CD8-positive, alpha-beta T cell (primary cell): ENCODE measurements at regions of chr2 and their contacts with region 1.

Region 1: DNA sequence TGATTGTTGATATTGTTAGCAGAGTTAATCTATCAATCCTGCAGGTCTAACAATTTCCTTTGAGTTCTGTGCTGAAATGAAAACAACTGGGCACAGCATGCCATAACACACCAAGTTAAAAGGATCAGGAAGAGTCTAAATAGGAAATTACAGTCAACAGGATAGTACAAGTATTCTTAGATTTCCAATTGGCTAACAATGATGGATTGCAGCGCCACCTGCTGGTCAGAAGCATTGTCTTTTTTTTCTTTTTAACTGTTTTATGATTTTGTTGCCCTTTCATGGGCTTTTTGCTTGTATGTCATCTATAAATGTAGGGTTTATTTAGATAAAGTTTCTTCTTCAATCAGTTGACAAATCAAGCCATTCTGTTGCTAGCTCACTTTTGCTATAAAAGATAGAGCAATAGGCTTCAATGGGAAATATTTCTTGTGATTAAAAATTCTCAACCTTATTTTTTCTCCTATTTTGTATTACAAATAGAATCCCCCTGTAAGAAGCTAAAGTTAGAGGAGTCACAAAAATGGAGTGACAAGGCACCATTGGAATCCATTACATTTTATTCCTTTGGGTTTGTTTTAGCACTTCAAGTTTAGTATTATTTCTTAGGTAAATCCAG is 40.8 kb upstream of the RPRM start:
- DNase-seq: peak; percentile 13 to 66 (median 50)
- ATAC-seq: no peak
- H3K4me3 ChIP-seq: no peak overlapping the region
- H3K4me3 Mint-ChIP-seq: no peak overlapping the region
- H3K27ac ChIP-seq: no peak overlapping the region
- H3K27ac Mint-ChIP-seq: no peak overlapping the region
- H3K4me1 ChIP-seq: no peaks in the 10 kb centered on the region
- H3K4me1 Mint-ChIP-seq: no peaks in the 10 kb centered on the region
- H3K27me3 ChIP-seq: no peaks in the 10 kb centered on the region
- H3K27me3 Mint-ChIP-seq: no peaks in the 10 kb centered on the region
- CTCF ChIP-seq: peak; percentile 88

Region 2: DNA sequence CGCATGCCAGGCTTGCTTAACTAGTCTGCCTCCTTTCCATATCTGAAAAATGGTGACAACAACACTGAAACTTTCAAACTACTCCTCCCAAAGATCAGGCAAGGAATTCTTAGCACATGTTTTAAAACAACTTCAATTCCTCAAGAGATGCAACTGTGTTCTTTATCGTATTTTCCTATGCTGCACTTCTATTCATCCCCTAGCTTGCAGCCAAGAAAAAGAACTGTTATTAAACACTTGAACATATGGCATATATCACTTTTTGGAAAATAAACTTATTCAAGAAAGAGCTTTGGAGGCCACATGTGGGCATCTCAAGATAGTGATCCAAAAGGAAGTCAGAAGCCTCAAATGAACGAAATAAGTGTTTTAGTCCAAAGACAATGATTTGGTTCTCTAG is 1268.2 kb before region 1 on chr2:
- CTCF ChIA-PET with region 1: no interaction called
- POLR2A ChIA-PET with region 1: no interaction called
- intact Hi-C with region 1: no loop called
- DNase-seq: no peak
- ATAC-seq: no peak
- H3K4me3 ChIP-seq: no peak overlapping the region
- H3K4me3 Mint-ChIP-seq: no peak overlapping the region
- H3K27ac ChIP-seq: no peak overlapping the region
- H3K27ac Mint-ChIP-seq: no peak overlapping the region
- H3K4me1 ChIP-seq: no peaks in the 10 kb centered on the region
- H3K4me1 Mint-ChIP-seq: no peaks in the 10 kb centered on the region
- H3K27me3 ChIP-seq: no peaks in the 10 kb centered on the region
- H3K27me3 Mint-ChIP-seq: peaks cover 13% of the 10 kb centered on the region
- CTCF ChIP-seq: no peak

Region 3: DNA sequence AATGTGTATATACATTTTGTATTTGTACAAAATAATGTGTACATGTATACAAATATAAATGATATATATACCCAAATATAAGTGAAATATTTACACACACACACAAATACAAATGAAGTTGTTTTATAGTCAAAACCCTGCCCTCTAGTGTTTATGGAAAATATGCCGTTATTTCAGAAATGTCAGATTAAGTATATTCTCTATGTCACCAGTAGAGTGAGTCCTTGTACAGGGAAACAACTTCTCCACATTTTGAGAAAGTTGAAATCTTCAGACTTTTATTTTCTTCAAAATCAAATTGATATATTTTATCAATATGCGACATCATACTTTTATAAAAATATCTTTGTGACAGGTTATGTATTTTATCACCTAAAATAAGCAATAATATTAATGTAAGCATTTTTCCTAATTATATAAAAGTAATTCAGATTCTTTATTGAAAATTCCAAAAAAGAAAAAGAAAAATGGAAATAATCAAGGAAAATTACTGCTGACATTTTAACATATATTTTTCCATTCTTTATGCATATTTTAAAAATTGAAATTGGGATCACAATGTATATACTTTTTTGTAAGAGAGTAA is 778.5 kb before region 1 on chr2:
- CTCF ChIA-PET with region 1: no interaction called
- POLR2A ChIA-PET with region 1: no interaction called
- intact Hi-C with region 1: loop called in 1 of 2 experiments (anchors 2 kb)
- DNase-seq: peak in 2 of 9 experiments; percentile 57 to 69
- ATAC-seq: peak; percentile 89
- H3K4me3 ChIP-seq: no peak overlapping the region
- H3K4me3 Mint-ChIP-seq: no peak overlapping the region
- H3K27ac ChIP-seq: no peak overlapping the region
- H3K27ac Mint-ChIP-seq: no peak overlapping the region
- H3K4me1 ChIP-seq: no peaks in the 10 kb centered on the region
- H3K4me1 Mint-ChIP-seq: peaks cover 2% of the 10 kb centered on the region
- H3K27me3 ChIP-seq: no peaks in the 10 kb centered on the region
- H3K27me3 Mint-ChIP-seq: no peaks in the 10 kb centered on the region
- CTCF ChIP-seq: peak; percentile 100

Region 4: DNA sequence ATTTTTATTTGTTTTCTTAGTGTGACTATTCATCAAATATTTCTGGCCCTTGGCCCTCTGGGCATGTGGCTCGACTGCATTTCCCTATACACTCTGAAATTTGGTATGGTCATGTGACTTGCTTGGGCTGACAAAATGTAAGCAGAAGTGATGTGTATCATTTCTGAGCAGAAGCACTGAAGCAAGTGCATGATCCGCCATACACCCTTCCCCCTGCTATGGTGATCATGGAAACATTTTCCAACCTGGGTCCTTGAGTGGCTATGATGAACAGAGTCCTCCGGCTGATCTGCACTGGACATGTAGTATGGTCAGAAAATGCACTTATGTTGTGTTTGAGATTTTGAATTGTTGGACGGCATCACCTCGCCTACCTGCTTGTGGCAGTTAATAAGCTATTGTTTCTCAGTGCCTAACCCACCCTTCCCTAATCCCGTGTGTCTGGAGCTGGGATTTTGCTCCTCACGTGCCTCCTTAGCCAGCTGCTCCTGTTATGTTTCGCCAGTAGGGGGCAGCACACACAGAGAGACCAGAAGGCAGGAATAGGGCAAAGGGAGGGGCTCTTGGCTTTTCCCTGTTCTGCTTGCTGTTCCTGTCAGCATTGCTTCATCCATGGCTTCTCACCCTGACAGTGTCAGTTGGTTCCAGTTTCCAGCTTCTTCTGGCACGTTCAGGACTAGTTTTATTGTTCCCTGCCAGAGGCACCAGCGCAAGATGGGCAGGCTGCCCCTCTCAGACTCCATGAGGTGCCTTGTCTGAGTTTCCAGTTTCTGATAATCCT is 593.6 kb before region 1 on chr2:
- CTCF ChIA-PET with region 1: no interaction called
- POLR2A ChIA-PET with region 1: no interaction called
- intact Hi-C with region 1: loop called in 1 of 2 experiments (anchors 10 kb)
- DNase-seq: peak in 5 of 9 experiments; percentile 3 to 31 (median 21)
- ATAC-seq: no peak
- H3K4me3 ChIP-seq: no peak overlapping the region
- H3K4me3 Mint-ChIP-seq: no peak overlapping the region
- H3K27ac ChIP-seq: no peak overlapping the region
- H3K27ac Mint-ChIP-seq: no peak overlapping the region
- H3K4me1 ChIP-seq: no peaks in the 10 kb centered on the region
- H3K4me1 Mint-ChIP-seq: no peaks in the 10 kb centered on the region
- H3K27me3 ChIP-seq: peaks cover 0 to 4% of the 10 kb centered on the region in 2 experiments
- H3K27me3 Mint-ChIP-seq: peaks cover 11% of the 10 kb centered on the region
- CTCF ChIP-seq: no peak

Region 5: GRCh38 chr2:153055182-153055581 is 464.2 kb before region 1 on chr2:
- CTCF ChIA-PET with region 1: no interaction called
- POLR2A ChIA-PET with region 1: no interaction called
- intact Hi-C with region 1: no loop called
- DNase-seq: no peak
- ATAC-seq: no peak
- H3K4me3 ChIP-seq: no peak overlapping the region
- H3K4me3 Mint-ChIP-seq: no peak overlapping the region
- H3K27ac ChIP-seq: no peak overlapping the region
- H3K27ac Mint-ChIP-seq: no peak overlapping the region
- H3K4me1 ChIP-seq: no peaks in the 10 kb centered on the region
- H3K4me1 Mint-ChIP-seq: no peaks in the 10 kb centered on the region
- H3K27me3 ChIP-seq: no peaks in the 10 kb centered on the region
- H3K27me3 Mint-ChIP-seq: no peaks in the 10 kb centered on the region
- CTCF ChIP-seq: no peak

Region 6: GRCh38 chr2:153165021-153165420 is 354.3 kb before region 1 on chr2:
- CTCF ChIA-PET with region 1: interaction called, 4 read pairs
- POLR2A ChIA-PET with region 1: interaction called, 4 read pairs
- intact Hi-C with region 1: loop called in 1 of 2 experiments (anchors 2 kb)
- DNase-seq: no peak
- ATAC-seq: no peak
- H3K4me3 ChIP-seq: no peak overlapping the region
- H3K4me3 Mint-ChIP-seq: no peak overlapping the region
- H3K27ac ChIP-seq: no peak overlapping the region
- H3K27ac Mint-ChIP-seq: no peak overlapping the region
- H3K4me1 ChIP-seq: no peaks in the 10 kb centered on the region
- H3K4me1 Mint-ChIP-seq: no peaks in the 10 kb centered on the region
- H3K27me3 ChIP-seq: no peaks in the 10 kb centered on the region
- H3K27me3 Mint-ChIP-seq: peaks cover 3% of the 10 kb centered on the region
- CTCF ChIP-seq: no peak

Region 7: DNA sequence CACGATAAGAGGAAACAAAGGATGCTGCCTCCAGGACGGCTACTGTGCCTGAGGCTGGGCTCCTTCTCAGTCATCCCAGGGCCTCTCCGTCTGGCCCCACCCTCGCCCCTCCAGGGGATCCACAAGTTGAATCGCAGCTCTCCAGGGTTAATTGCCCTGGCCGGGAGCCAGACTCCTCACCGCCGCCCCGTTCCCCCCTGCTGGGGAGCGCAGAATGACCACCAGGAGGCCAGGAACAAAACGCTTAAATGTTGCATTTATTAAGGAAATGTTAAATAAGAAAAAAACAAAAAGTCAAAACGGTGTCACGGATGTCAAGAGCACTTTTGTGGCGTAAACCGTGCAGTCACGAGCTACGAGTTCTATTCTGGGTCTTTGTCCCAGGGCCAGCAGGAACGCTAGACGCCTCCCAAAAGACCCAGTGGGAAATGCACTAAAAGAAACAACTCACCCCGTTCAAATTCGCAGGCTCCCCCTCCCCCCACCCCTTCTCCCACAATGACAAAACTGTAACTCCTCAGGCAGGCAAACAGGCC is 42.2 kb before region 1 on chr2:
- CTCF ChIA-PET with region 1: no interaction called
- POLR2A ChIA-PET with region 1: no interaction called
- intact Hi-C with region 1: no loop called
- DNase-seq: peak in 1 of 9 experiments; percentile 5
- ATAC-seq: no peak
- H3K4me3 ChIP-seq: peak overlapping the region in 1 of 2 experiments; percentile 40
- H3K4me3 Mint-ChIP-seq: peak overlapping the region; percentile 79
- H3K27ac ChIP-seq: no peak overlapping the region
- H3K27ac Mint-ChIP-seq: no peak overlapping the region
- H3K4me1 ChIP-seq: peaks cover 21% of the 10 kb centered on the region
- H3K4me1 Mint-ChIP-seq: peaks cover 22% of the 10 kb centered on the region
- H3K27me3 ChIP-seq: peaks cover 10 to 11% of the 10 kb centered on the region in 2 experiments
- H3K27me3 Mint-ChIP-seq: peaks cover 57% of the 10 kb centered on the region
- CTCF ChIP-seq: no peak